HepG2 (cell line): ENCODE measurements at regions of chr4 and their contacts with region 1.

Region 1: GRCh38 chr4:154612472-154613414 is at the start of gene FGG:
- DNase-seq: peak; percentile 91
- ATAC-seq: peak; percentile 98
- H3K4me3 ChIP-seq: peak within 1 kb of the TSS; percentile 67 to 74 (median 67)
- H3K27ac ChIP-seq: peak within 1 kb of the TSS; percentile 78
- H3K4me1 ChIP-seq: peaks cover 70% of the 10 kb centered on the region
- H3K27me3 ChIP-seq: no peaks in the 10 kb centered on the region
- CTCF ChIP-seq: no peak
- EP300 ChIP-seq: peak in 1 of 2 experiments; percentile 80; a peak in 2 of 4 replicates
- POLR2A ChIP-seq: peak; percentile 96 to 99
- RAD21 ChIP-seq: no peak
- total RNA-seq, gene FGG: 1,495 and 2,423 TPM in 2 replicates

Region 2: DNA sequence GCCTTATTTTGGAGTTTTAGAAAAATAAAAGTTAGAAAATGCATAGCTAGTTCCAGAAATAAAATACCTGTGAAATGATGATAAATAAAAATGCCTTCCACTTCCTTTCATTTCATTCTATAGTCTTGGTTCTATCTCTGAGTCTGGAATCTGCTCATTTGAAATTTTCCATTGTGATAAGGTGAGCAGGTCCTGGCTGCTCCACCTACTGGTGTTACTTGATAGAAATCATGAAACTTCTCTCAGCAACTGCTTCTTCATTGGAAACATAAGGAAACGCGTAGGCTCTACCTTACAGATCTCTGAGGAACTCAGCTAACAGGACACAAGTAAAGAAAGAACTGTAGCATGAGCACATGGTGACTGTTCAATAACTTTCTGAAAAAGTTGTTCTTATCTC is 262.9 kb before region 1 on chr4:
- CTCF ChIA-PET with region 1: no interaction called
- POLR2A ChIA-PET with region 1: no interaction called
- in situ Hi-C with region 1: no loop called
- intact Hi-C with region 1: no loop called
- DNase-seq: peak; percentile 12
- ATAC-seq: peak; percentile 59
- H3K4me3 ChIP-seq: no peak overlapping the region
- H3K27ac ChIP-seq: no peak overlapping the region
- H3K4me1 ChIP-seq: no peaks in the 10 kb centered on the region
- H3K27me3 ChIP-seq: no peaks in the 10 kb centered on the region
- CTCF ChIP-seq: peak; percentile 29; the same call in 1 of the 2 replicates
- EP300 ChIP-seq: no peak
- POLR2A ChIP-seq: no peak
- RAD21 ChIP-seq: no peak

Region 3: DNA sequence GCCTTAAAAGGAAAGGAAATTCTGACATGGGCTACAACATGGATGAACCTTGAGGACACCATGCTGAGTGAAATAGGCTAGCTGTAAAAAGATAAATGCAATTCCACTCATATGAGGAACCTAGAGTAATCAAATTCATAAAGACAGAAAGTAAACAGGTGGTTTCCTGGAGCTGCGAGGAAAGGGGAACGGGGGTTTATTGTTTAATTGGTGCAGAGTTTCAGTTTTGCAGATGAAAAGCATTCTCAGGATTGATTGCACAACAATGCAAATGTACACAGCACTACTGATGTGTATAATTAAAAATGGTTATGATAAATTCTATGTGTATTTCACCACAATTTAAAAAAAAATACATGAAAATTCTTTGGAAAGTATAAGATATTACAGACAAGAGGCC is 86.6 kb before region 1 on chr4:
- CTCF ChIA-PET with region 1: no interaction called
- POLR2A ChIA-PET with region 1: no interaction called
- in situ Hi-C with region 1: no loop called
- intact Hi-C with region 1: no loop called
- DNase-seq: no peak
- ATAC-seq: no peak
- H3K4me3 ChIP-seq: no peak overlapping the region
- H3K27ac ChIP-seq: no peak overlapping the region
- H3K4me1 ChIP-seq: no peaks in the 10 kb centered on the region
- H3K27me3 ChIP-seq: peaks cover 0 to 3% of the 10 kb centered on the region in 2 experiments; a peak in 1 of 5 replicates
- CTCF ChIP-seq: no peak
- EP300 ChIP-seq: no peak
- POLR2A ChIP-seq: no peak
- RAD21 ChIP-seq: no peak

Region 4: GRCh38 chr4:154595807-154596206 is 16.9 kb before region 1 on chr4:
- CTCF ChIA-PET with region 1: interaction called, 4 read pairs
- POLR2A ChIA-PET with region 1: interaction called, 468 read pairs
- in situ Hi-C with region 1: no loop called
- intact Hi-C with region 1: loop called (anchors 2 kb)
- DNase-seq: peak; percentile 73
- ATAC-seq: no peak
- H3K4me3 ChIP-seq: no peak overlapping the region
- H3K27ac ChIP-seq: peak overlapping the region; percentile 45
- H3K4me1 ChIP-seq: peaks cover 98% of the 10 kb centered on the region
- H3K27me3 ChIP-seq: no peaks in the 10 kb centered on the region
- CTCF ChIP-seq: no peak
- EP300 ChIP-seq: peak in 1 of 2 experiments; percentile 98; a peak in 2 of 4 replicates
- POLR2A ChIP-seq: no peak
- RAD21 ChIP-seq: no peak

Region 5: GRCh38 chr4:154602404-154603020 is 10.2 kb before region 1 on chr4:
- CTCF ChIA-PET with region 1: interaction called, 4 read pairs
- POLR2A ChIA-PET with region 1: interaction called, 127 read pairs
- in situ Hi-C with region 1: no loop called
- intact Hi-C with region 1: loop called (anchors 2 kb)
- DNase-seq: no peak
- ATAC-seq: peak; percentile 8; the same call in 1 of the 3 replicates
- H3K4me3 ChIP-seq: no peak overlapping the region
- H3K27ac ChIP-seq: peak overlapping the region; percentile 0
- H3K4me1 ChIP-seq: peaks cover 87% of the 10 kb centered on the region
- H3K27me3 ChIP-seq: no peaks in the 10 kb centered on the region
- CTCF ChIP-seq: no peak
- EP300 ChIP-seq: no peak
- POLR2A ChIP-seq: peak; percentile 27 to 40; a peak in 3 of 4 replicates
- RAD21 ChIP-seq: no peak

Region 6: GRCh38 chr4:155143512-155143911 is 530.8 kb after region 1 on chr4:
- CTCF ChIA-PET with region 1: no interaction called
- POLR2A ChIA-PET with region 1: no interaction called
- in situ Hi-C with region 1: no loop called
- intact Hi-C with region 1: no loop called
- DNase-seq: no peak
- ATAC-seq: no peak
- H3K4me3 ChIP-seq: no peak overlapping the region
- H3K27ac ChIP-seq: no peak overlapping the region
- H3K4me1 ChIP-seq: no peaks in the 10 kb centered on the region
- H3K27me3 ChIP-seq: no peaks in the 10 kb centered on the region
- CTCF ChIP-seq: no peak
- EP300 ChIP-seq: no peak
- POLR2A ChIP-seq: no peak
- RAD21 ChIP-seq: no peak